Left lung (tissue), 14 donors: ENCODE measurements at regions of chr10 and their contacts with region 1.

Region 1: DNA sequence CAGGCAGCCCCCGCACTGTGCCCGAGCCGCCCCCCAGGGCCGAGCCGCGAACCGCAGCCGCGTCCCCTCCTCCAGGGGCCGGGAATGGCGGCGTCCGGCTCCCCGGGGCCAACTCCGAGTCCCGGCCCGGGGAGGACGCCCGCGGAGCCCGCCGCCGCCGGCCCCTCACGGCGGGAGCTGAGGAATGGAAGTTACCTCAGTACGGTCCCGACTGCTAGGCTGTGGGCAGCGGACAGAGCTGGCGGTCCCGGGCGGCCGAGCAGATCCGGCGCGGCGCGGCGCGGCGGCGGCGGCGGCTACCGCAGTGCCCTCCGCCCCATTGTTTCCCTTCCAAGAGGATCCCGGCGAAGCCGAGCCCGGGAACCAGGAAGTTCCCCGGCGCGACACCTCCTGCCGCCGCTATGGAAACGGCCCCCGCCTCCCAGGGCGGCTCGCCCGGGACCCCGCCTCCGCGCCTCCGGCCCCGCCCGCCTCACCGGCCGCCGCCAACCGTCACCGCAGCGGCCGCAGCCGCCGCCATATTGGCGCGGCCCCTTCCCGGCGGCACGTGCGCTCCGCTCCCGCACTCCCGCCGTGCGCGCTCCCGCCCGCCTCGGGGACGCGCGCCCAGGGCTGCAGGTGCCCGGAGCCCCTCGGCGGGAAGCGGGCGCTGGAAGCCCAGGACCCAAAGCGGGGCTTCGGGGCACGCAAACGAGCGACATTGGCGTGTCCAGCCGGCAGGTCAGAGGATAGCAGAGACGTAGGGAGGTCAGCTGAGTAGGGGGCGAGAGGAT is at the start of gene USP6NL:
- DNase-seq: peak; percentile 86 to 99 (median 94)
- ATAC-seq: peak; percentile 96
- H3K4me3 ChIP-seq: peak within 1 kb of the TSS; percentile 66 to 80
- H3K27ac ChIP-seq: peak within 1 kb of the TSS; percentile 85 to 91
- H3K4me1 ChIP-seq: peaks cover 9 to 37% of the 10 kb centered on the region in 2 donors
- H3K27me3 ChIP-seq: no peaks in the 10 kb centered on the region
- CTCF ChIP-seq: no peak
- polyA plus RNA-seq, gene USP6NL: 23.1 to 25.6 (median 24.0) TPM

Region 2: GRCh38 chr10:11525503-11525902 is 85.9 kb before region 1 on chr10:
- intact Hi-C with region 1: loop called in 1 of 2 experiments (anchors 10 kb)
- DNase-seq: peak in 2 of 4 donors; percentile 53 to 67
- ATAC-seq: peak; percentile 19
- H3K4me3 ChIP-seq: no peak overlapping the region
- H3K27ac ChIP-seq: no peak overlapping the region
- H3K4me1 ChIP-seq: peaks cover 19 to 39% of the 10 kb centered on the region in 2 donors
- H3K27me3 ChIP-seq: no peaks in the 10 kb centered on the region
- CTCF ChIP-seq: no peak